OCI-LY7 (cell line): ENCODE measurements at regions of chr1 and their contacts with region 1.

Region 1: GRCh38 chr1:50978144-50978851 is 8.3 kb downstream of the CDKN2C start:
- DNase-seq: peak; percentile 69
- H3K4me3 ChIP-seq: peak overlapping the region; percentile 91
- H3K27ac ChIP-seq: peak overlapping the region; percentile 26
- H3K4me1 ChIP-seq: peaks cover 34% of the 10 kb centered on the region
- CTCF ChIP-seq: no peak

Region 2: DNA sequence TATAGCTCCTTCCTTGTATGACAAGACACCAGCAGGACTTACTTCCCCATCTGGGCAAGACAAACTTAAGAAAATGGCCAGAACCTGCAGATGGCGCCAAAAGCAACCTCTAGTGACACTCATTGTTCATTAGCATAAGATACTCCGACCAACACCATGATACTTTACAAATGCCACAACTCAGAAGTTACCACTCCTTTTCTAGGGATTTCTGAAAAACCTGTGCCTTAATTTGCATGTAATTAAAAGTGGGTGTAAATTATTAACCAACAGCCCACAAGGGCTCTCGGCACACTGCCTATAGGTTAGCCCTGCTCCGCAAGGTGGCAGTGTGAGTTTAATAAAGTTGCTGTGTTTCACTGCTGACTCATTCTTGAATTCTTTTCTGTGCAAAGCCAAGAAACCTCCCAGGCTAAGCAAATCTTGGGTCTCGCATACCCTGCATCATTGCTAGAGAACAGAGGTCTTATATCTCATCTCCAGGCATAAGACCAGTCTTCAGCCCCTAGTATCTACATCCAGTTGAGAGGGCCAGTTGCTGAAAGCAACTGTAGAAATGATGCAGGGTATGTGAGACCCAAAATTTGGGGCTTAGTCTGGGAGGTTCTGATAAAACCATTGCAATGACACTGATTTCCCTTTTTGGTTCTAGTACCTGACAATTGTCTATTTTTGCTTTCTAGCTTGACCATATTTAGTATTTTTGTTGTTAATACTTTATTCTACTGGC is 104.7 kb before region 1 on chr1:
- CTCF ChIA-PET with region 1: no interaction called
- POLR2A ChIA-PET with region 1: no interaction called
- intact Hi-C with region 1: loop called (anchors 5 kb)
- DNase-seq: peak; percentile 83
- H3K4me3 ChIP-seq: peak overlapping the region; percentile 48
- H3K27ac ChIP-seq: peak overlapping the region; percentile 8
- H3K4me1 ChIP-seq: peaks cover 14% of the 10 kb centered on the region
- CTCF ChIP-seq: peak; percentile 100

Region 3: GRCh38 chr1:50959913-50960844 is 18.1 kb before region 1 on chr1 and contains the start of gene FAF1:
- CTCF ChIA-PET with region 1: no interaction called
- POLR2A ChIA-PET with region 1: interaction called, 23 read pairs
- intact Hi-C with region 1: no loop called
- DNase-seq: peak; percentile 98
- H3K4me3 ChIP-seq: peak within 1 kb of the TSS; percentile 88
- H3K27ac ChIP-seq: peak within 1 kb of the TSS; percentile 70
- H3K4me1 ChIP-seq: peaks cover 25% of the 10 kb centered on the region
- CTCF ChIP-seq: peak; percentile 46; the same call in 1 of the 2 replicates
- total RNA-seq, gene FAF1: 42.3 and 57.5 TPM in 2 replicates

Region 4: DNA sequence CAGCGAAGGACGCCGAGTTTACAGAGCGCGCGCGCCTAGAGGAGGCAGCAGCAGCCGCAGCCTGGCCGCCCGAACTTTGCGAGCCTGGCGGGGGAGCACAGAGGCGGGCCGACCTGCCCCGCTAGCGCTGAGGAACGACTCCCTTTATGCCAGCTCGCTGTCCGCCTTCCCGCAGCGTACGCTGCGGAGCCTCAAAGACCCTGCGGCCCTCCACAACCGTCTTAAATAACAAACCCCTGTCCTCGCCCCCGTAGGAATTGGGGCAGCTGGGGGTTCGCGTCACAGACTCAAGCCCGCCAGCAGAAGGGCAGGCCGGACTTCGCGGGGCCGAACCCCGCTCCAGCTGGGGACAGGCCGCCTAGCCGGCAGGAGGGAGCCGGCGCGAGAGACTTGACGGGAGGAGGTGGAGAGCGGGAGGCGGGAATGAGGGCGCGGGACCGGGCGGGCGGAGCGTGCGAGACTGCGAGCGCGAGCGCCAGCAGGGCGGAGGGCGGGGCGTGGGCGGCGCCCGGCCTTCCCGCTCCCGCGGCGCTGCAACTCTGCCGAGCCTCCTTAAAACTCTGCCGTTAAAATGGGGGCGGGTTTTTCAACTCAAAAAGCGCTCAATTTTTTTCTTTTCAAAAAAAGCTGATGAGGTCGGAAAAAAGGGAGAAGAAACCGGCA is 10.0 kb before region 1 on chr1:
- CTCF ChIA-PET with region 1: no interaction called
- POLR2A ChIA-PET with region 1: interaction called, 37 read pairs
- intact Hi-C with region 1: loop called (anchors 1 kb)
- DNase-seq: peak; percentile 91
- H3K4me3 ChIP-seq: peak overlapping the region; percentile 88
- H3K27ac ChIP-seq: peak overlapping the region; percentile 89
- H3K4me1 ChIP-seq: peaks cover 23% of the 10 kb centered on the region
- CTCF ChIP-seq: peak; percentile 65

Region 5: GRCh38 chr1:51000160-51000559 is 21.9 kb after region 1 on chr1:
- CTCF ChIA-PET with region 1: no interaction called
- POLR2A ChIA-PET with region 1: interaction called, 14 read pairs
- intact Hi-C with region 1: loop called (anchors 1 kb)
- DNase-seq: peak; percentile 85
- H3K4me3 ChIP-seq: peak overlapping the region; percentile 53
- H3K27ac ChIP-seq: peak overlapping the region; percentile 90
- H3K4me1 ChIP-seq: peaks cover 32% of the 10 kb centered on the region
- CTCF ChIP-seq: no peak

Region 6: DNA sequence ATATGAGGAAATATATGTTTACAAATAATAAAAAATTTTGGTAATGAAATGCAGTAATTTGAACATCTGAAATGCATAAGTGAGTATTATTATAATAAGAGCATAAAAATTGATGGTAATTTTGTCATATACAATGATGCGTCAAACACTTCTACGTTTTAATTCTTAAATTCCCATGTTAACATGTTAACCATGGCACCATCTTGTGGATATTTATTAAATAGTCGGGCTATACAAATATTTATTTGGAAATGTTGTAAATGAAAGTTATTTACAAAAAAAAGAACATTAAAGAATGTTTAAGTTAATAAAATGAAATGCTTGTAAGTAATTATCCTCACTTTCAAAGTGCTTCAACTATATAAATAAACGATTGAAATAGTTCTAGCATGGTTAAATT is 66.5 kb after region 1 on chr1:
- CTCF ChIA-PET with region 1: no interaction called
- POLR2A ChIA-PET with region 1: no interaction called
- intact Hi-C with region 1: loop called (anchors 5 kb)
- DNase-seq: peak; percentile 49
- H3K4me3 ChIP-seq: no peak overlapping the region
- H3K27ac ChIP-seq: no peak overlapping the region
- H3K4me1 ChIP-seq: no peaks in the 10 kb centered on the region
- CTCF ChIP-seq: peak; percentile 83